Activated naive CD8-positive, alpha-beta T cell treated with anti-CD3 and anti-CD28 coated beads, Interleukin-2, amount 10 ng/mL, durations not matched to agents 7 days and 5 days (primary cell): ENCODE measurements at regions of chr5 and their contacts with region 1.

Region 1: GRCh38 chr5:140564196-140565023 is at the starts of genes APBB3 and SLC35A4:
- DNase-seq: peak; percentile 93
- ATAC-seq: peak; percentile 93
- H3K4me3 Mint-ChIP-seq: peak within 1 kb of the TSS; percentile 89
- H3K27ac Mint-ChIP-seq: peak within 1 kb of the TSS; percentile 98
- H3K4me1 Mint-ChIP-seq: peaks cover 39% of the 10 kb centered on the region
- H3K27me3 Mint-ChIP-seq: no peaks in the 10 kb centered on the region
- total RNA-seq, gene APBB3: 41.3 to 47.7 TPM
- total RNA-seq, gene SLC35A4: 80.8 to 94.0 TPM

Region 2: DNA sequence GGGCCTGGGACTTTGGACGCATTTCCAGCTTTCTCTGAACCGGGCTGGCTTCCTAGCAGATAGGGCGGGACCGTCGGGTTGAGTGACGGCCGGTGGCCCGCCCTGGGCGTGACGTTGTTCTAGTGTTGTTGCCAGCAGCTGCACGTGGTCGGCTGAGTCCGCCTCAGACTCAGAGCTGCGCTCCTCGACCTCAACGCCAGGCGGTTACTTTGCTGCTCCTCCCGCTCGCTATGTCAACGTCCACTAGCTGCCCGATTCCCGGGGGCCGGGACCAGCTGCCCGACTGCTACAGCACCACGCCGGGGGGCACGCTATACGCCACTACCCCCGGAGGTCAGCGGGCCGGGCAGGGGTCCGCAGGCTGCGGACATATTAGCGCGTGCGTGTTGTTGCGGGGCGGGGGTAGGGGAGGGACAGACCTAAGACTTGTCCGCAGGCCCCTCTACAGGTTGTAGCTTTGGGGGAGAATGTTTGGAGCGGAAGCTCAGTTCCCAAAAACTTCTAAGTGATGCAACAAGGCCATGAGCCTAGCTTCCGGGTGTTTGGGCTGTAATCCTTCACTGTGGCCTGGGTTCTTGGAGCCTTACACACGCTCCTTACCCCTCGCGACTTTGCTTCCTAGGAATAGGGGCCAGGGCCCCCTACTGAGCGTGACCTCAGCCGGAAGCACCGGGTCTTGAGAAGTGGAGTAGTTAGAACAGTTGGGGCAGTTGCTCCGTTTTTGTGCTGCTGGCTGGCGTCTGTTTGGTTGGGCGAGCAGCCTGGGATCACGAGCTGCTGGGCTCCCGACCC is 16.7 kb before region 1 on chr5 and contains the start of gene EIF4EBP3:
- POLR2A ChIA-PET with region 1: interaction called, 23 read pairs
- DNase-seq: peak; percentile 86
- ATAC-seq: peak; percentile 96
- H3K4me3 Mint-ChIP-seq: peak within 1 kb of the TSS; percentile 87
- H3K27ac Mint-ChIP-seq: peak within 1 kb of the TSS; percentile 99
- H3K4me1 Mint-ChIP-seq: peaks cover 35% of the 10 kb centered on the region
- H3K27me3 Mint-ChIP-seq: no peaks in the 10 kb centered on the region
- total RNA-seq, gene EIF4EBP3: 11.8 to 12.0 TPM